Activated B cell treated with CpG ODN at 0.5 μM for 24 hours (primary cell): ENCODE measurements at regions of chr17 and their contacts with region 1.

Region 1: DNA sequence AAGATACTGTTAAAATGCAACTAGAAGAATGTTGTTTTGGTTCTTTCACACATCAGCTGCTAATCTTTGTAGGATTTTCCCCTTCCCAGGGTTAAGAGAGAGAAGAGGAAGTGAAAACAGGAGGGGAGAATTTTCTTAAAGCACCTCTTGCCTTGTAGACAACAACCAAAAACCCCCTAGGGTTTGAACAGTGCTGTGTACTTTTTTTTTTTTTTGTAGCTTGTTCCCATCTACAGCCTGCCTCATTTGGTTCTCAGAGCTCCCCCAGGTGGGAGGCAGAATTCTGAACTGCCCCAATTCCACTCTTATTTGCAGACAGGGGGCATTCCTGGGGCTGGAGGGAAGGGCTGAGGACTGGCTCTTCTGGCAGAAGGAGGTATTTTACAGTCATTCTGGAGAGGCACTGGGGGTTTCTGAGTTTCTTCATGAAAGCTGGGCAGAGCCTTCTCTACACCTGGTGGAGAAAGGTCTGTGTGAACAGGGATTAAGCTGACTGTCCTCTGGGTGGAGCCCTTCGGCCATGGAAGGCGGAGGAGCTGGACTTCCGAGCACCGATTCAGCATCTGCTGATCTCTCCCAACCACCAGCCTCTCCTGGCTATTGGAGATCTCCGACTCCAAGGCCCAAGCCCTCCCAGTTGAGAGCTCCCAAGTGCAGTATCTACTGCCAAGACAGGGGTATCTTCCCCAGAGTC is 32.2 kb downstream of the SMARCE1 start:
- DNase-seq: peak; percentile 58
- ATAC-seq: peak; percentile 83
- H3K4me3 Mint-ChIP-seq: peak overlapping the region; percentile 77
- H3K27ac Mint-ChIP-seq: peak overlapping the region; percentile 96
- H3K4me1 Mint-ChIP-seq: peaks cover 81% of the 10 kb centered on the region
- H3K27me3 Mint-ChIP-seq: no peaks in the 10 kb centered on the region
- CTCF ChIP-seq: no peak

Region 2: DNA sequence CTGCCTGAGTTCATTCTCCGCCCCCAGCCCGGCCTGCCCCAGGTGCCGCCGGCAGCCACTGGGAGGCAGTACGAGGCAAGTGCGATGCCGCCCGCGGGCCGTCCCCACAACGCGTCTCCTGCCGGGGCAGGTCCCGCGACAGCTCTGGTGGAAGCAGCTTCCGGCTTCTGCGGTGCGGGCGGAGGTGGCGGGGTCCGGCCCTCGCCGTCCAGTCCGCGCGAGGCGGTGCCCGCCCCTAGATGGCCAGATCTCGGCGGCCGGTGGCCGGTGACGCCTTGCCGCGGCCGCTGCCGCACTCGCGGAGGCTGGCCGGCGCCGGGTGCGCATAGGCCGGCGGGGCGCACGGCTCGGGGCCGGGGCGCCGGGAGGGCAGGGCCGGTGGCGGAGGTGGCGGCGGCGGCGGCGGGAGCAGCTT is 252.7 kb before region 1 on chr17:
- CTCF ChIA-PET with region 1: interaction called, 4 read pairs
- POLR2A ChIA-PET with region 1: interaction called, 7 read pairs
- intact Hi-C with region 1: loop called (anchors 1 kb)
- DNase-seq: peak; percentile 73
- ATAC-seq: peak; percentile 85
- H3K4me3 Mint-ChIP-seq: peak overlapping the region; percentile 58
- H3K27ac Mint-ChIP-seq: peak overlapping the region; percentile 67
- H3K4me1 Mint-ChIP-seq: peaks cover 17% of the 10 kb centered on the region
- H3K27me3 Mint-ChIP-seq: peaks cover 14% of the 10 kb centered on the region
- CTCF ChIP-seq: no peak

Region 3: GRCh38 chr17:40474419-40475002 is 140.9 kb before region 1 on chr17:
- CTCF ChIA-PET with region 1: interaction called, 11 read pairs
- POLR2A ChIA-PET with region 1: interaction called, 5 read pairs
- intact Hi-C with region 1: no loop called
- DNase-seq: no peak
- ATAC-seq: no peak
- H3K4me3 Mint-ChIP-seq: no peak overlapping the region
- H3K27ac Mint-ChIP-seq: no peak overlapping the region
- H3K4me1 Mint-ChIP-seq: peaks cover 16% of the 10 kb centered on the region
- H3K27me3 Mint-ChIP-seq: peaks cover 7% of the 10 kb centered on the region
- CTCF ChIP-seq: no peak

Region 4: DNA sequence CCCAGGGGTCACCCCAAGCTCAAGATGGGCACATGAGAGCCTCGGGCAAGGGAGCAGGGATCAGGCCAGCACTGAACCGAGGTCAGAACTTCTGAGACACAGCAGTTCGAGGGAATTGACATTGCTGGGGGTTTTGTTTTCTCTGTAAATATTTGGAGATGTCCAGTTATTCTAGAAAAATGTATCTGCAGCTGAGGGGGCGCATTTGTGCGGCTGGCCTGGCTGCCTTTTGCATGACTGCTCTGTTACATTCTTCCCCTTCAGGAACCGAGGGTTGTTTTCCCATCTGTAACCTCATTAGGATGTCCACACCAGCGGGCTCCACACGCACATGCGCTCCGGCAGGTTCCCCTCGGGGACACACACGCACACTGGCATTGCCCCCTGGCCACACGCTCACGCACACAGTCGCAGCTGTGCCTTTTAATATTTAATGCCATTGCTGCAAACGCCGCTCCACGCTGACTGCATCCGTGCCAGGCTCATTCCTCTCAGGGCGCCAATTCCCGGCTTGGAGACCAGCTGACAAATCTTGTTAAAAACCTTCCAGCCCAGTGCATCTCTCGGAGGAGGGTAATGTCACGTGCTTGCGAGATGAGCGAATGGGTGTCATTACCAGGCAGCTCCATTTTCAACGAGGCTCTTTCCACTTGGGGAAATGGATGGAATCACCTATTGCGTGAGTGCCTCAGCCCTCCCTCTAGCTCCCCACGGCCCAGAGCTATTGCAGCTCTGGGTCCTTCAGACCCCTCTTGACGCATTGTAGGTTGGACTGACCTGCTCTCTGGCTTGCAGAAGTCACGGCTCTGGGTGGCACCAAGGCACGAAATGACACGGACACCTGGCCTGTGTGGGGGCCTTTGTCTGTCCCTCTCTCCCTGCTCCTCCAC is 63.3 kb before region 1 on chr17:
- CTCF ChIA-PET with region 1: interaction called, 426 read pairs
- POLR2A ChIA-PET with region 1: interaction called, 1,885 read pairs
- intact Hi-C with region 1: loop called (anchors 1 kb)
- DNase-seq: peak; percentile 32
- ATAC-seq: peak; percentile 3
- H3K4me3 Mint-ChIP-seq: peak overlapping the region; percentile 36
- H3K27ac Mint-ChIP-seq: peak overlapping the region; percentile 99
- H3K4me1 Mint-ChIP-seq: peaks cover 100% of the 10 kb centered on the region
- H3K27me3 Mint-ChIP-seq: no peaks in the 10 kb centered on the region
- CTCF ChIP-seq: no peak

Region 5: DNA sequence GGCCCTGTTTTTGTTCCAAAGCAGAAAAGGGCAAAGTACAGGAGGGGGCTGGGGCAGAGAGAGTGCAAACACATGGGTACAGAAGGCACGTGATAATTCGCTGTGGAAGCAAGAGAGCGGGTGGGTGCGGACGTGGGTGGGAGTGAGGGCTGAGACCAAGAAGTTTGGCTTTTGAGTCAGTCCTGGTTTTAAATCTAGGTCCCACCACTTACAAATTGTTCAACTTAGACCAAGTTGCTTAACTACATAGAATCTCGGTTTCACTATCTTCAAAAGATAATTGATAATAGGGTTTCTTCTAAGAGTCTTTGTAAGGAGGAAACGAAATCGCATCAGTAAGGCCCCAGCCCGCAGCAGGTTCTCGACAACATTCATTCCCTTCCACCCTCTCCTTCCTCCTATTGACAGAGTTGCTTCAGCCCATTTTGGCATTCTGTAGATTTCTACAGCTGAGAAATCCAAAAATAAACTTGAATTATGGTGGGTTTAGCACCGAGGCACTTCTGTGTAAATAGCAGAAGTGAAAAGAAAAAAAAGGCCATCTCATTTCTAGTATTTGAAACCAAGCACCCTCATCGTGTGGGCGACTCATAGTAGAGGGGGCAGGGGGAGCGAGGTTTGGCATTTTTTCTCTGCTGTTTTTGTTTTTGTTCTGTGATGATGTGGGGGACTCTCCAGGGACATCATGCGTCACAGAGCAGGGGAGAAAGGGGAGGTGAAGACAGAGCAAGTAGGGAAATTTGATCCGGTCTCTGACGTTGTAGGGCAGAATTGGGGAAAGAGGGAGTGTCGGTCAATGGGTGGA is 16.6 kb before region 1 on chr17:
- CTCF ChIA-PET with region 1: interaction called, 27 read pairs
- POLR2A ChIA-PET with region 1: interaction called, 180 read pairs
- intact Hi-C with region 1: loop called (anchors 1 kb)
- DNase-seq: peak; percentile 70
- ATAC-seq: peak; percentile 75
- H3K4me3 Mint-ChIP-seq: peak overlapping the region; percentile 59
- H3K27ac Mint-ChIP-seq: peak overlapping the region; percentile 92
- H3K4me1 Mint-ChIP-seq: peaks cover 95% of the 10 kb centered on the region
- H3K27me3 Mint-ChIP-seq: no peaks in the 10 kb centered on the region
- CTCF ChIP-seq: no peak

Region 6: DNA sequence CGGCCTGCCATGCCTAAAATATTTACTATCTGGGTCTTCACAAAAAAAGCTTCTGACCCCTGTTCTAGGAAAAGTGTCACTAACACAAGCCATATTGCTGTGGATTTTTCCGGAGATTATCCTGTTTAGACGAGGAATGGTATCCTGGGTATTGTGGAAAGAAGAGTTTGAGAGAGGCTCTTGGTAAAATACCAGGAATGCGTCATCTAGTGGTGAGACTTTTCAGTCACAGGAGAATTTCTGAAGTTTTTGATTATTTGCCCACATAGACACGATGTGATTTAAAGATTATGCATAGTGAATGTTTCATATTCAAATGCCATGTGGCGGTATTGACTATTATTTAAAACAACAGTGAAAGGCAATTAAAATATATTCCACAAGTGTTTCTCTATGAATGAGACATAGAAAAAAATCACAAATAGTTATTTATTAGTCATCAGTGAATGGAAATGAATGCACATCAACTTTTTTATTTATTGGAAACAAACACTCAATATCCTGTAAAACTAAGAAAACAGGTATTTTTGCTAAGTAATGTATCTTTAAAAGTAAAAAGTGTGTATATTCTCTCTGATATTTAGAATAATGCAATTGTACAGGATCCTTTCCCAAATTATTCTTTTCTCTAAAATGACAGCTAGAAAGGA is 176.5 kb after region 1 on chr17:
- CTCF ChIA-PET with region 1: interaction called, 8 read pairs
- POLR2A ChIA-PET with region 1: no interaction called
- intact Hi-C with region 1: loop called (anchors 1 kb)
- DNase-seq: no peak
- ATAC-seq: no peak
- H3K4me3 Mint-ChIP-seq: no peak overlapping the region
- H3K27ac Mint-ChIP-seq: no peak overlapping the region
- H3K4me1 Mint-ChIP-seq: no peaks in the 10 kb centered on the region
- H3K27me3 Mint-ChIP-seq: peaks cover 17% of the 10 kb centered on the region
- CTCF ChIP-seq: no peak

Region 7: DNA sequence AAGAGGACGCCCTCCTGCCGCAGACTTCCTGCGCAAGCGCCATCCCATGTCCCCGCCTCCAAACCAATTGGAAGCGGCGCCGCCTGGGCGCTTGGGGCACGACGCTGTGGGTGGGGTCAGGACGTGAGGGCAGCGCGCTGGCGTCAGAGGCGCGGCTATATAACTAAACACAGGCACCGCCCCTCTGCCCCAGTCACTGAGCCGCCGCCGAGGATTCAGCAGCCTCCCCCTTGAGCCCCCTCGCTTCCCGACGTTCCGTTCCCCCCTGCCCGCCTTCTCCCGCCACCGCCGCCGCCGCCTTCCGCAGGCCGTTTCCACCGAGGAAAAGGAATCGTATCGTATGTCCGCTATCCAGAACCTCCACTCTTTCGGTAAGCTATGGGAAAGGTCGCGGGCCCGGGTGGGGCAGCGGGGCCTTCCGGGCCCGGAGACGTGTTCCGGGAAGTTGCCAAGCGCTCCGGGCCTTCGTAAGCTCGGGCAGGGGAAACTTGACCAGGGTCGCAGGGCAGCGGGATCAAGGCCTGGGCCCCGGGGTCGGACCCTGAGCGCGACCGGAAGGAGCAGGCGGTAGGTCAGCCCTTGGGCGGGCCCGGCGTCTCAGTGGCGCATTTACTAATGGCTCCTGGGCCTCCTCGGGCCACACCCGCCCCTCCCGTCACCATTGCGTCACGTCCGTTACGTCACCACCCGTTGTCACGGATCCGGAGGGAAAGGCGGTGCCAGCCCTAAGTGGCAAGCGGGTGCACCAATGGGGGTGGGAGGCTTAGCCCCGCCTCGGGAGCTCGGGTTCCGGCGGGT is 1073.5 kb after region 1 on chr17 and contains the start of gene EIF1:
- CTCF ChIA-PET with region 1: interaction called, 3 read pairs
- POLR2A ChIA-PET with region 1: interaction called, 14 read pairs
- intact Hi-C with region 1: no loop called
- DNase-seq: peak; percentile 100
- ATAC-seq: peak; percentile 78
- H3K4me3 Mint-ChIP-seq: peak within 1 kb of the TSS; percentile 95
- H3K27ac Mint-ChIP-seq: peak within 1 kb of the TSS; percentile 99
- H3K4me1 Mint-ChIP-seq: peaks cover 39% of the 10 kb centered on the region
- H3K27me3 Mint-ChIP-seq: no peaks in the 10 kb centered on the region
- CTCF ChIP-seq: no peak
- total RNA-seq, gene EIF1: 843 and 900 TPM in 2 replicates